ENCODE measurements at regions of chr16 and their contacts with region 1.

Region 1: GRCh38 chr16:75305364-75306098 is 54.1 kb upstream of the BCAR1 start:
- DNase-seq: peak; percentile 90
- ATAC-seq: peak; percentile 85 to 94

Region 2: DNA sequence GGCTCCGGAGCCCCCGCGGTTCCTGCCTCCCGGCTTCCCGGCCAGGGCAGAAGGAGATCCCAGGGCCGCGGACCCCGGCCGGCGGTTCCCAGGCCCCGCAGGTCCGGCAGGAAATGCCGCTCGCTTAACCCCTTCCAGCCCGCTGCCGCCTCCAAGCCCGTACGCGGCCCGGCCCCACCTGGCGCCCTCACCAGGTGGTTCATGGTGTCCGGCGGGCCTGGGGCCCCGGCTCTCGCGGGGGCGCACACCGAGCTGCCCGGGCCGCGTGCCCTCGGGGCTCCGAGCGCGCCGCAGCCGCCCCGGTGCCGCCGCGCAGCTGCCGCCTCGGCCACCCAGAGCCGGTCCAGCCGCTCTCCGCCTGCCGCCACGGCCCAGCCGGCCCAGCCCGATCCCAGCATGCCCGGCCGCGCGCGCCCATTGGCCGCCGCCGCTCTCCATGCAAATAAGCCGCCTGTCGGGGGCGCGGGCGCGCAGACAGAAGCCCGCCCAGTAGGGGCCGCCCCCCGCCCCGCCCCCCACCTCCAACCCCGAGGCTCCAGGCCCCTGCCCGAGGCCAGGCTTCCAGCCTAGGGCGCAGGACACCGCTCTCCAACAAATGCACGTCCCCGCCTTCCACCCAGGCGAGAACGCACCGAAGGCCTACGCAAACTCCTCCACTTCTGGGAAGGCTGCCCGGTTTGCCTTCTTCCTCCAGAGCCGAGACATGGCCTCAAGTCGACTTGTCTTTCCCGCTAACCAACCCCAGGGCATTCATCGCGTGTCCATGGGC is 54.1 kb before region 1 on chr16 and contains the start of gene BCAR1:
- intact Hi-C with region 1: loop called (anchors 5 to 10 kb)
- DNase-seq: peak; percentile 93
- ATAC-seq: peak; percentile 76 to 85
- total RNA-seq, gene BCAR1: 46.5 to 65.9 TPM

Region 3: DNA sequence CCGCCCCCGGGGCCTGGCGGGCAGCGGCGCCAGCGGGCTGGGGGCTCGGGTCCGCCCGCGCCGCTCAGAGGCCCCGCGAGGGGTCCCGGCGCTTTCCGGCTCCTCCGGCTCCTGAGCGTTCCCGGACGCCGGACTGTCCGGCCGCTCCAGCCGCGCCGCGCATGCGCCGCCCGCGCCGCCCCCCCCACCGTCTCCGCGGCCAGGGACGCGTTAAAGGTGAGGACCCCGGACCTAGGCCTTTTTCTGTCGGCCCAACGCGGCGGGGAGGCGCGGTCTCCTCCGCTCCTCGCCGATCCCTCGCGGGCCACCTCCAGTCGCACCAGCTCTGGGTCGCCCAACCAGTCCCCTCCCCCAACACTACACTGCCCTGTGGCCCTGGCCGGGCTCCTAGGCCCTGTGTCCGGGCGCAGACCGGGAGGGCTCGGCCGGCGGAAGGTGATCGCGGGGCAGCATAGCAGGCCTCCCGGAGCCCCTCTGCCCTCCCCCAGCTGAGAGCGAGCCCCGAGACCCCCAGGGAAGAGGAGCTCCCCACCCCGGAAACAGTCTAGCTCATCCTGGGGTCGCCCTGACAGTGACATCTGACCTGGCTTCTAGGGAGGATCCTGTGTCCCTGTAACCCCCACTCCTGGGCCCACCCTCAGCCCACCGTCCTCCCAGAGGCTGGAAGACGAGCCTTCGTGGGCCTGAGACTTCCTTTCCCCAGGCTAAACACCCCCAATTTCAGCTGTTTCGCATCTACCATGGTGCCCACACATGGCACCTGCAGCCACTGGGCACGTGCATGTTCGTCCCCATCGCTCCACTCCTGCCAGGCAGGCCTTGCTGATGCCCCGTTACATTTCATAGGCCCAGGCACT is 39.5 kb before region 1 on chr16:
- intact Hi-C with region 1: loop called in 1 of 2 experiments (anchors 5 kb)
- DNase-seq: peak; percentile 72
- ATAC-seq: peak; percentile 55 to 70

Region 4: GRCh38 chr16:75385507-75386152 is 80.1 kb after region 1 on chr16:
- intact Hi-C with region 1: loop called in 1 of 2 experiments (anchors 5 kb)
- DNase-seq: no peak
- ATAC-seq: peak in 1 of 2 donors; percentile 46

Measured in left cardiac atrium (tissue), 4 donors.